ENCODE measurements at regions of chr14 and their contacts with region 1.

Region 1: GRCh38 chr14:52351233-52352060 is 37.3 kb downstream of the PTGER2 start:
- DNase-seq: peak; percentile 82
- H3K4me3 Mint-ChIP-seq: peak overlapping the region; percentile 81
- H3K27ac Mint-ChIP-seq: peak overlapping the region; percentile 99
- H3K4me1 Mint-ChIP-seq: peaks cover 64% of the 10 kb centered on the region
- H3K27me3 Mint-ChIP-seq: no peaks in the 10 kb centered on the region

Region 2: DNA sequence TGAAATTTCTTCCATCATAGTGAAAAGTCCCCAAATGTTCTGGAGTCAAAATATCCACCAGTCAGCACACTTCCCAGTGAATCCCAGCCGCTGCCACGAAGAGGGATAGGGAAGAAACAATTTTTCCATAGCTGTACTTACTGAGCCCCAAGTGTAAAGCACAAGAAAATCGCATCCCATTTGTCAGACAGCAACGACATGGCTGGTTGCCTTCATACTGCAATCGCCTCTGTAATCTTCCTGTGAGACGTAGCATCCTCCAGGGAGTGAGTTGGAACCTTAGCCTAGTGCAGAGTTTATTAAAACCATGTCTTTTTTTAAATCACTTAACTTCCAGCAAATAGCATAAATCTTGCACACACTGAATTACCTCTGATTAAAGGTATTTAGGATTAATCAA is 434.3 kb before region 1 on chr14:
- intact Hi-C with region 1: no loop called
- DNase-seq: no peak
- H3K4me3 Mint-ChIP-seq: no peak overlapping the region
- H3K27ac Mint-ChIP-seq: no peak overlapping the region
- H3K4me1 Mint-ChIP-seq: peaks cover 29% of the 10 kb centered on the region
- H3K27me3 Mint-ChIP-seq: no peaks in the 10 kb centered on the region

Region 3: GRCh38 chr14:52313903-52314594 is 37.4 kb before region 1 on chr14 and contains the start of gene PTGER2:
- intact Hi-C with region 1: loop called (anchors 1 kb)
- DNase-seq: peak; percentile 97
- H3K4me3 Mint-ChIP-seq: peak within 1 kb of the TSS; percentile 99
- H3K27ac Mint-ChIP-seq: peak within 1 kb of the TSS; percentile 99
- H3K4me1 Mint-ChIP-seq: peaks cover 62% of the 10 kb centered on the region
- H3K27me3 Mint-ChIP-seq: no peaks in the 10 kb centered on the region
- total RNA-seq, gene PTGER2: 66.7 and 69.9 TPM in 2 replicates

Region 4: DNA sequence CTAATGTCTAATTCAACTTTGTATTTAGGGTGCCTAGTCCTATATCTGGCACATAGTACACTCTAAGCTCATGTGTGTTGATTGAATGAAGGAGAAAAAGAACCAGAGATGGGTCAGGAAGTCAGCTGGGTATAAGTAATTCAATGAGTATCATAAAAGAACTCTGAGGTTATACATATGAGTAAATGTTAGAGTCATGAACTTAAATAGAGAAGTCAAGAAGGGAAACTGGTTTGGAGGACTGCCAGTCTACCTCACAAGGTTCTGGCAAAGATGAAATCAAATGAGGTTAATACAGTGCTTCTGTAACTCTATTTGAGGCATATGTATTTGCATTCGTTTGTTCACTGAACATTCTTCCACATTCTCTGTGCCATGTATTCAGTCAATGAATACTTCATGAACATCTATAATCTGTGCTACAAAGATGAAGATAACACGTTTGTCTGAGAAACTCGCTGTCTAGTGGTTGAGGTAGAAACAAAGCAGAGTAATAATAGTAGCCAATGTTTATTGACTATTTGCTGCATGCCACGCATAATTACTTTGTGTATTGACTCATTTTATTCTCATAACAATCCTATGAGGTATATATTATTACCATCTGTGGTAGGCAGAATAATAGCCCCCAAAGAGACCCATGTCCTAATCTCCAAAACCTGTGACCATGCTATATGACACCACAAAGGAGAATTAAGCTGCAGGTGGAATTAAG is 51.5 kb after region 1 on chr14:
- intact Hi-C with region 1: loop called (anchors 1 kb)
- DNase-seq: peak; percentile 70
- H3K4me3 Mint-ChIP-seq: peak overlapping the region; percentile 28
- H3K27ac Mint-ChIP-seq: peak overlapping the region; percentile 75
- H3K4me1 Mint-ChIP-seq: peaks cover 71% of the 10 kb centered on the region
- H3K27me3 Mint-ChIP-seq: peaks cover 1% of the 10 kb centered on the region

Region 5: DNA sequence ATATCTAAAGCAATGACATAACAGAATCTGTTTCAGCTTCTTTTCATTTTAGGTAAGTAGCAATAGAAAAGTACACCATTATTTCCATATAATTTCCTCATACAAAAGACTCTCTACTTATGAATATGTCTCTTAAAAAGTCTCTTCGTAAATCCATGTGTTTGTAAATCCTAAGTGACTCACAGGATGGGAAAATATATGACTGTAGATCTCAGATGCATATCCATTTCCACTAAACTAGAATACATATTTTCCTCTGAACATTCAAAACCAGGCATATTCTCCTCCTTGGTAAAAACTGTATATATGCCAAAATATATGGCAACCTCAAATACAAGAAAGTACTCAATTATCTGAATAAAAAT is 107.3 kb after region 1 on chr14:
- intact Hi-C with region 1: loop called (anchors 1 kb)
- DNase-seq: no peak
- H3K4me3 Mint-ChIP-seq: no peak overlapping the region
- H3K27ac Mint-ChIP-seq: no peak overlapping the region
- H3K4me1 Mint-ChIP-seq: peaks cover 15% of the 10 kb centered on the region
- H3K27me3 Mint-ChIP-seq: no peaks in the 10 kb centered on the region

Region 6: DNA sequence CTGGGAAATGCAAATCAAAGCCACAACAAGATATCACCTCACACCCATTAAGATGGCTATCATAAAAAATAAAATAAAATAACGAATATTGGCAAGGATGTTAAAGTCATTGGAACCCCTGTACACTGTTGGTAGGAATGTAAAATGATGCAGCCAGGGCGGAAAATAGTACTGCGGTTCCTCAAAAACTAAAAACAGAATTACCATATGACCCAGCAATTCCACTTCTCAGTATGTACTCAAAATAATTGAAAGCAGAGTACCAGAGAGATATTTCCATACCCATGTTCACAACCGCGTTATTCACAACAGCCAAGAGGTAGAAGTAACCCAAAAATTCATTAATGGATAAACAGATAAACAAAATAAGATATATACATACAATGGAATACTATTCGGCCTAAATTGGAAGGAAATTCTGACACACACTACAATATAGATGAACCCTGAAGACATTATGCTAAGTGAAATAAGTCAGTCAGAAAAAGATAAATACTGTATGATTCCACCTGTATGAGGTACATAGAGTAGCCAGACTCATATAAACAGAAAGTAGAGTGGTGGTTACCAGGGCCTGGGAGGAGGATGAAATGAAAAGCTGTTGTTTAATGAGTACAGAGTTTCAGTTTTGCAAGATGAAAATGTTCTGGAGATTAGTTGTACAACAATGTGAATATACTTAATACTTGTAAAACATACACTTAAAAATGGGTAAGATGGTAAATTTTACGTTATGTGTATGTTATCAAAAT is 116.2 kb after region 1 on chr14:
- intact Hi-C with region 1: loop called (anchors 1 kb)
- DNase-seq: peak; percentile 75
- H3K4me3 Mint-ChIP-seq: peak overlapping the region; percentile 28
- H3K27ac Mint-ChIP-seq: peak overlapping the region; percentile 56
- H3K4me1 Mint-ChIP-seq: peaks cover 30% of the 10 kb centered on the region
- H3K27me3 Mint-ChIP-seq: no peaks in the 10 kb centered on the region

Region 7: DNA sequence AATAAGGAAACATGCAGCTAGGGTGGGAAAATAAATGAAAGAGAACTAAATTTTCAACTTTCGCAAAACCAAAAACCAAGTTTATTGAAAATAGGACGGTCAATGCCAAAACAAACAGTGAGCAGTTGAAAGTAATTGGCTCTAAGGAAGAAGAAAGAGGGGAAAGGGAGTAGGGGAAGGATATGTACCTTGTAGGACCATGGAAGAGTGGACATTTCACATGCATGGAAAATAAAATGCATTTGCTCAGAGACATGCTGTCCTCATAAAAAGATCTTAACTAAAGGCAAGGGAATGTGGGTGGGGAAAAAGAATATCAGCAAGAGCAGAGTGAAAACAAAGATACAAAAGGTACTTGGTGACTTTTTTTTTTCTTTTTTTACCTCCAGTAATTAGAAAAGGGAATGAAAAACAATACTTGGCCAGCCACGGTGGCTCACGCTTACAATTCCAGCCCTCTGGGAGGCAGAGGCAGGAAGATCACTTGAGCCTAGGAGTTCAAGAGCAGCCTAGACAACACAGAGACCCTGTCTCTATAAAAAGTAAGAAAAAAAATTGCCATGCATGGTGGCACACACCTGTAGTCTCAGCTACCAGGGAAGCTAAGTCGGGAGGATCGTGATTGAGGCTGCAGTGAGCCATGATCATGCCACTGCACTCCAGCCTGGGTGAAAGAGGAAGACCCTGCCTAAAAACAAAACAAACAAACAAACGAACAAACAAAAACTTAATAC is 194.3 kb after region 1 on chr14:
- intact Hi-C with region 1: no loop called
- DNase-seq: no peak
- H3K4me3 Mint-ChIP-seq: no peak overlapping the region
- H3K27ac Mint-ChIP-seq: no peak overlapping the region
- H3K4me1 Mint-ChIP-seq: peaks cover 13% of the 10 kb centered on the region
- H3K27me3 Mint-ChIP-seq: no peaks in the 10 kb centered on the region

Region 8: GRCh38 chr14:52741865-52742264 is 390.4 kb after region 1 on chr14:
- intact Hi-C with region 1: no loop called
- DNase-seq: no peak
- H3K4me3 Mint-ChIP-seq: peak overlapping the region; percentile 75
- H3K27ac Mint-ChIP-seq: peak overlapping the region; percentile 91
- H3K4me1 Mint-ChIP-seq: peaks cover 31% of the 10 kb centered on the region
- H3K27me3 Mint-ChIP-seq: no peaks in the 10 kb centered on the region